GM10248 (cell line): ENCODE measurements at regions of chr9 and their contacts with region 1.

Region 1: DNA sequence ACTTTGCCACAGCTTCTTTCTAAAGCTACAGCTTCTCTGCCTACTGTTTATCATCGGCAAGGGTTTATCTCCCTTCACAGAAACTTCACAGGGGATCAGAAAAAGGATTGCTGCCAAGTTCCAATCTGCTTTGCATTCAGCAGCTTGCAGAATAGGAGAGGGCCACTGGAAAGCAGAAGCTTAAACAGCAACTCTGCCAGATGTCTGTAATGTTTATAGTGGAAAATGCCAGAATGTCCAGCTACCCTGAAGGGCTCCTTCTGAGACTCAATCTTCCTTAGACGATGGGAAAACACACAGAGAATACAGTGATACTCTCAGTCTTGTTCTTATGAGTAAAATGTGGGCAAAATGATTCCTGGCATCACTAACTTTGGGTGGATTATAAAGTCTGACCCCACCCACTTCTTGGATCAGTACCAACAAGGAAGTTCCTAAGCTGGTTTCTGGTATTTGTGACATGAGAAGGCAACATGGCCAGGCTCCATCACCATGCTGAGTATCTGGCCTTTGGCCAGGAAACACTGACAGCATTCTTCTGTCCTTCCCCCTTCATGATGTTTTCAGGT is 19.0 kb downstream of the STOM start:
- DNase-seq: no peak
- CTCF ChIP-seq: no peak

Region 2: DNA sequence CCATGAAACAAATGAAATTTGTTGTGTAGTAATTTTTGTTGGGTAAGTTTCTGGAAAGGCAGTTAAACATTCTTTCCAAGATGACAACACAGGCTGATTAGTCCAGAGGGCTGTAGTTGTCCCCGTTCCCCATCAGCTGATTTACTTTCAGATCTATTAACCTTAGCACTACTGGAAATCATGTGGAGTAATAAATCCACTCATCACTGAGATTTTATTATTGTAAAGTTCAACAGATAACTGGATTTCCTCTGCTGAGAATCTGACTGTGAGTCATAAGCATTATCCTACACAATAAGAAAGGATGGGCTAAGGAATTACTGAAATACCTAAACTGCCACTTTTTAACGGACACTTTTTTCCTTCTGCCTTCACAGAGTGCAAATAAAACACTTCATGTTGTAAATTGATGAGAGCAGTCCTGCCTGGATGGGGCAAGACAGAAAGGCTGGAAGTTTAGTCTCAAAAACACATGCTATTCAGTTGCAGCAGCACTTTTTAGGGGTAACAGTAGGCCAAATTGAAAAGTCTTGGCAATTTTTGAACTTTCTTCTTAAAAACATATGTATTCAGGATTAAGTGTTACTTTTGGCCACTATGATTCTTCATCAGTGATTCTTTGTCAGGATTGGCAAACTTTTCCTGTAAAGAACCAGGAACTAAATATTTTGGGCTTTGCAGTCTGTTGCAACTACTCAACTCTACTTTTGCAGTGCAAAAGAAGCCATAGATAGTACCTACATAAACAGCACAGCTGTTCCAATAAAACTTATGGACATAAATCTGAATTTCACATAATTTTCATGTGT is 11.9 kb after region 1 on chr9:
- CTCF ChIA-PET with region 1: interaction called, 11 read pairs
- POLR2A ChIA-PET with region 1: no interaction called
- DNase-seq: no peak
- CTCF ChIP-seq: no peak